Left colon (tissue), 2 donors: ENCODE measurements at regions of chr6 and their contacts with region 1.

Region 1: DNA sequence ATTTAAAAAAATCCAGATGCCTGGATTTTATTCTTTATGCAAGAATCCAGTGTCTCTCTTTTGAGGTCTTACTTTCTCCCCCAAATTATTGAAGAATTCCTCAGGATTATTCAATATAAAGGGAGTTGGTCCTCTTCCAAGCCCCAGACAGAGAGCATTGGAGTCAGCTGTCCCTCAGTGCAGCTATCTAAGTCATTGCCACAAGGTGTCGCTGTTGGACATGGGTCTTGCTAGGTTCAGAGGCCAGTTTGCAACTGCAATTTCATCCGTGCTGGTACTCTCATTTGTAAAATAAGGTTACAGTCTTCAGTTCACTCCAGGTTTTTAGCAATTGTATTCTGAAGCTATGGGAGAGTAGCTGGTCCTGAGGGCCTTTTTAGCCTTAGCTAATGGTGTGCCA is 27.8 kb downstream of the CCN2 start:
- DNase-seq: peak; percentile 34 to 67
- ATAC-seq: peak; percentile 85

Region 2: GRCh38 chr6:131960371-131961133 is 37.2 kb after region 1 on chr6:
- intact Hi-C with region 1: no loop called
- DNase-seq: no peak
- ATAC-seq: no peak

Region 3: GRCh38 chr6:132218059-132218696 is 294.8 kb after region 1 on chr6:
- intact Hi-C with region 1: loop called in 1 of 2 experiments (anchors 5 kb)
- DNase-seq: no peak
- ATAC-seq: no peak